PC-3 (cell line): ENCODE measurements at regions of chr12 and their contacts with region 1.

Region 1: GRCh38 chr12:110039085-110039807 is 9.1 kb downstream of the C12orf76 start:
- DNase-seq: peak; percentile 98
- ATAC-seq: peak; percentile 94
- H3K4me3 ChIP-seq: peak overlapping the region; percentile 43
- H3K27ac ChIP-seq: peak overlapping the region; percentile 92
- H3K4me1 ChIP-seq: peaks cover 31% of the 10 kb centered on the region
- H3K27me3 ChIP-seq: no peaks in the 10 kb centered on the region
- CTCF ChIP-seq: no peak

Region 2: DNA sequence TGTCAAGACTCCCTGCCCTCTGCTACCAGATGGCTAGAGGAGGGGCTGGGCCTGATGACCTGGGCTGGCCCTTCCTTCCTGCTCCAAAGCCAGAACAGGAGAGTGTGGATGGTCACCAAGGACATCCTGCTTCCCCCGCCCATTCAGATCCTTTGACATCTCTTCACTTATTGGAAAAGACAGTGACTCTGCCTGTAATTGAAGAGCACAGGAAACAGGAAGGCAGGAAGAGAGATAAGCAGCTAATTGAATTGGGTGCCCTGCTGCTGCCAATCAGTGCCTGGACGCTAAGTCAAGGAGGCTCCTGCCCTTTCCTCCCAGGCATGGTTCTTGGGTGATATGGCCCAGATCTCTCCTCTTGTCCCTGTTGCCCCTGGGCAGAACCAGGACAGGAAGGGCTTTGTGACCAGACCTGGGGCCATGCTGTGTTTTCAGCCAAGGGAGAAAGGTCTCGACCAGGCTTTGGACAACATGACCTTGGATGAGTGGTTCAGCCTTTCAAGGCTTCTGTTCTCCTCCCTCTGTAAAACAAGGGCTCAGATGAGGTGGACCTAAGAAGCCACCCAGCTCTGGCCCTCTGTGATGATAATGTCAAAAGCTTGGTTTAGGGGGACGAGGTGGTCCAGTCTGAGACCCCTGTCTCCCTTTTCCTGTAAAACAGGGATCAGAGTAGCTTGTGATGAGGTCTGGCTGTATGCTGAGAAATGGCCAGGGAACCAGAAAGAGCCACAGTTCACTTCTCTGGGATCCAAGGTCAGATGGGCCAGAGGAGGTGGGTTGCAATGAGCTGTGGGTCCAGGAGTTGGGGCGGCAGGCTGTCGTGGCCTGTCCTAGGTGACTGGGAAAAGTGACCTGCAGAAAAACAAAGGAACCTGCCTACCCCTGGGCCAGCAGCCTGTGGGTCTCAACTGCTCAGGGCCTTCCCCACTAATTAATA is 286.9 kb before region 1 on chr12:
- CTCF ChIA-PET with region 1: no interaction called
- POLR2A ChIA-PET with region 1: no interaction called
- intact Hi-C with region 1: no loop called
- DNase-seq: no peak
- ATAC-seq: no peak
- H3K4me3 ChIP-seq: no peak overlapping the region
- H3K27ac ChIP-seq: no peak overlapping the region
- H3K4me1 ChIP-seq: no peaks in the 10 kb centered on the region
- H3K27me3 ChIP-seq: no peaks in the 10 kb centered on the region
- CTCF ChIP-seq: no peak

Region 3: GRCh38 chr12:109934026-109934425 is 105.2 kb before region 1 on chr12:
- CTCF ChIA-PET with region 1: no interaction called
- POLR2A ChIA-PET with region 1: no interaction called
- intact Hi-C with region 1: loop called (anchors 10 kb)
- DNase-seq: peak; percentile 38
- ATAC-seq: peak; percentile 74
- H3K4me3 ChIP-seq: no peak overlapping the region
- H3K27ac ChIP-seq: no peak overlapping the region
- H3K4me1 ChIP-seq: no peaks in the 10 kb centered on the region
- H3K27me3 ChIP-seq: no peaks in the 10 kb centered on the region
- CTCF ChIP-seq: peak; percentile 71

Region 4: GRCh38 chr12:109987615-109988014 is 51.6 kb before region 1 on chr12:
- CTCF ChIA-PET with region 1: no interaction called
- POLR2A ChIA-PET with region 1: no interaction called
- intact Hi-C with region 1: no loop called
- DNase-seq: peak; percentile 72
- ATAC-seq: peak; percentile 96
- H3K4me3 ChIP-seq: no peak overlapping the region
- H3K27ac ChIP-seq: peak overlapping the region; percentile 70
- H3K4me1 ChIP-seq: peaks cover 4% of the 10 kb centered on the region
- H3K27me3 ChIP-seq: no peaks in the 10 kb centered on the region
- CTCF ChIP-seq: no peak

Region 5: DNA sequence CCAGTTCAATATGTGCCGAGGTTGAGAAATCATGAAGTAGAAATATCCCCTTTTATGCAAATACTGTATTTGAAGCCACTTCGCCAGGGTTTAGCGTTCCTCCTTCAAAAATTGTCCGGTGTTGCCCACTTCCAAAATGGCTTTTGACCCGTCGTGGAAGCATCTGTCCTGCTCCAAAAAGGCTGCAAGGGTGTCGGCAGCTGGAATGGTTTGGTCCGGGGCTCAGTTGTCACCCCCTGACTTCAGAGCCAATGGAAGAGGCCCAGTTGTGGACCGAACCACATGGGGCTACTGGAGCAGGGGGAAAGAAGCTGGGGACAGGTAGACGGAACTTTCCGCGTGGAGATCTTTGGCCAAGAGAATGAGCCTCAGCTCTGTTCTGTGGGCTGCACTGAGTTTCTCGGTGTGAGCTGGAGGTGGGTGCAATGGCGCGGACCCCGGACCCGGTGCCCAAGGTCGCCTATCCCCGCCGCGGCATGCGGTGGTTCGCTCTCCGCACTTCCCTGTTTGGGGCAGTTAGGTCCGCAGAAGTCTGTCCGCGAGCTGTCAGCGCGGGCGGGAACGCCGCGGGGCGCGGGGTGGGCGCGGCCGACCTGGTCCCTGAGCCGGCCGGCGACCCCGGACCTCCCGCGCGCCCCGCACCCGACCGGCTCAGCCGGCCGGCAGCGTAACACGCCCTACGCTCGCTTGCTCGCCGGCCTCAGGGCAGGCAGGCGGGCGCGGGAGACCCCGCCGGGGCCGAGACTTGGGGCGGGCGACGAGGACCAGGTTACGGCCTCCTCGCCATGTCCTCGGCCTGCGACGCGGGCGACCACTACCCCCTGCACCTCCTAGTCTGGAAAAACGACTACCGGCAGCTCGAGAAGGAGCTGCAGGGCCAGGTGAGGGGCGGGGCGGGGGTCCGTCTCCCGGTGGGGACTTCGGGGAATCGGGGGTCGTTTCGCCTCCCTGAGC is 40.1 kb before region 1 on chr12 and contains the start of gene ANKRD13A:
- CTCF ChIA-PET with region 1: no interaction called
- POLR2A ChIA-PET with region 1: no interaction called
- intact Hi-C with region 1: loop called (anchors 2 kb)
- DNase-seq: peak; percentile 95
- ATAC-seq: peak; percentile 71
- H3K4me3 ChIP-seq: peak within 1 kb of the TSS; percentile 86
- H3K27ac ChIP-seq: peak within 1 kb of the TSS; percentile 52
- H3K4me1 ChIP-seq: peaks cover 48% of the 10 kb centered on the region
- H3K27me3 ChIP-seq: no peaks in the 10 kb centered on the region
- CTCF ChIP-seq: no peak
- total RNA-seq, gene ANKRD13A: 117 and 118 TPM in 2 replicates